Lower leg skin (tissue), 4 donors: ENCODE measurements at regions of chr2 and their contacts with region 1.

Region 1: DNA sequence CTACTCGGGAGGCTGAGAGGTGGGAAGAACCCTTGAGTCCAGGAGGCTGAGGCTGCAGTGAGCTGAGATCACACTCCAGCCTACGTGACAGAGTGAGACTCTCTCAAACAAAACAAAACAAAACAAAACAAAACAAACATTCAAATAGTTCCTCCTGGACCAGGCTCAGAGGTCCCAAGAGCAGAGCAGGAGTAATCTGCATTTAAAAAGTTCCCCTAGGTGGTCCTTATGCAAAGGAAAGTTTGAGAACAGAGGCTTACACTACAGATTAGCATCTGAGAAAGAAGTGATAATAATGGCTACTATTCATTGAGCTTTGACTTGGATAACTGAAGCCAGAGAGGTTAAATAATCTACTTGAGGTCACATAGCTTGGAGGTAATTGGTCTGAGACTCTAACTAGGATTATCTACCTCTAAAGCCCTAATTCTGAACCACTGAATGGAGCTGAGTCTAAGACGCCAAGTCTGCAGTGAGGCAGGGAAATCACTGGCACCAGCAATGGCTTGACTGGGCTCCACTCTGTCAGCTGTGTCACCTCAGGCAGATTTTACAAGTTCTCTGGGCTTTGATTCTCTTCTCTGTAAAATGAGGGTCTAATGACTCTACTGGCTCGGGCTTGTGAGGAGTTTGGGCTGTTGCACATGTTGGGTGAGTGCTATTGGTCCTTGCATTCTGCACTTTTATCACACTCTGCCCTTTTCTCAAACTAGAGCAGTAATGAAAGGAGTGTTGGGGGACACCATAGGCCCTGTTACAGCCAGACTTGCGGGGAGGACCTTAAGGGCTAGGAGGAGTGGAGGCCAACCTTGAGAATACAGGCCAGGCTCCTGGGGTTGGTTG is 29.2 kb upstream of the DLX2 start:
- DNase-seq: no peak
- H3K4me3 ChIP-seq: no peak overlapping the region
- CTCF ChIP-seq: no peak
- POLR2A ChIP-seq: no peak

Region 2: DNA sequence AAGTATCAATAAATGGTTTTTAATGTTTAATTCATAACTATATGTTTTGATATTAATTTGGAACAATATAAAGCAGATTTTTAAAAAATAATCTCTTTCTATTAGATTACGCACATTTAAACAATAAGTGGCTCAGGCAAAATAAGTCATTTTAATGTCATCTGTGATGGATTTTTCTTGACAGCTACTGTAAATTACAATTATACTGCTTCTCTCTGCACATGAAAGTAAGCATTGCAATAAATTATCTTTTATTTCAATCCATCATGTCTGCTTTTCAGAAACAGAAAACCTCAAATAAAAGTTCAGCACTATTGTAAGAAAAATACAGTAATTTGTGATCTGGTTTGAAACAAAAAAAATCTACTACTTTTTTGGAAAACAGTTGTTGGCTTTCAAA is 57.7 kb before region 1 on chr2:
- intact Hi-C with region 1: loop called (anchors 2 kb)
- DNase-seq: no peak
- H3K4me3 ChIP-seq: no peak overlapping the region
- CTCF ChIP-seq: no peak
- POLR2A ChIP-seq: no peak